Heart right ventricle (tissue), 16 donors: ENCODE measurements at regions of chr9 and their contacts with region 1.

Region 1: GRCh38 chr9:25003686-25004085 is 458.0 kb upstream of the IZUMO3 start:
- DNase-seq: no peak
- ATAC-seq: no peak
- H3K4me3 ChIP-seq: no peak overlapping the region
- H3K27ac ChIP-seq: no peak overlapping the region
- H3K4me1 ChIP-seq: no peaks in the 10 kb centered on the region
- H3K27me3 ChIP-seq: no peaks in the 10 kb centered on the region
- CTCF ChIP-seq: no peak

Region 2: DNA sequence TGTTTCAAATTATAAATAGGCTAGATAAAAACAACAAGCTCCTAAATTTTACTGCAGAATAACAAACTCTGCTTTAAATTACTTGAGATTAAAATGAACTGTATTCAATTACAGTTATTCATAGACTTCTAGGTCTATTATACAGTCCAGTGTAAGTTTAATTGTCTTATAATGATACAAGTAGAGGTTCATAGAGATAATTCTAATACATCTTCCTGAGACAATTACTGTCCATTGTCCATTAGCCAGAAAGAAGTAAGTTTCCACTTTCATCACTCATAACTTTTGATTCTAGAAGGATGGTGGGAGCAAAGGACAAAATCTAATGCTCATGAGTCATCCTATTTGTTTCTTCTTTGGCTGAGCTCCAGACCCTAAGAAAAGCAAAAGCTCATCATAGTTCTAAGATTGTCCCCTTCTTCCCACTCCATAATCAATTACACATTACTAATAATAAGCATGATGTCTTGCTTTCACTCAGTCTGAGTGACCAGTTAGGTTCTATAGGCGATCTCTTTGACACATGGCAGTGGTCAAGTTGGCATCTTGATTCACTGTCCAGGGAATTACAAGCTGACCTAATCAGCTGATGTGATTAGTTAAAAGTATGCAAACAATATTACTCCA is 44.5 kb after region 1 on chr9:
- intact Hi-C with region 1: loop called in 1 of 10 experiments (anchors 10 kb)
- DNase-seq: no peak
- ATAC-seq: no peak
- H3K4me3 ChIP-seq: no peak overlapping the region
- H3K27ac ChIP-seq: no peak overlapping the region
- H3K4me1 ChIP-seq: no peaks in the 10 kb centered on the region
- H3K27me3 ChIP-seq: no peaks in the 10 kb centered on the region
- CTCF ChIP-seq: no peak